Activated naive CD8-positive, alpha-beta T cell treated with anti-CD3 and anti-CD28 coated beads, Interleukin-2, amount 10 ng/mL, durations not matched to agents 7 days and 5 days (primary cell): ENCODE measurements at regions of chr15 and their contacts with region 1.

Region 1: DNA sequence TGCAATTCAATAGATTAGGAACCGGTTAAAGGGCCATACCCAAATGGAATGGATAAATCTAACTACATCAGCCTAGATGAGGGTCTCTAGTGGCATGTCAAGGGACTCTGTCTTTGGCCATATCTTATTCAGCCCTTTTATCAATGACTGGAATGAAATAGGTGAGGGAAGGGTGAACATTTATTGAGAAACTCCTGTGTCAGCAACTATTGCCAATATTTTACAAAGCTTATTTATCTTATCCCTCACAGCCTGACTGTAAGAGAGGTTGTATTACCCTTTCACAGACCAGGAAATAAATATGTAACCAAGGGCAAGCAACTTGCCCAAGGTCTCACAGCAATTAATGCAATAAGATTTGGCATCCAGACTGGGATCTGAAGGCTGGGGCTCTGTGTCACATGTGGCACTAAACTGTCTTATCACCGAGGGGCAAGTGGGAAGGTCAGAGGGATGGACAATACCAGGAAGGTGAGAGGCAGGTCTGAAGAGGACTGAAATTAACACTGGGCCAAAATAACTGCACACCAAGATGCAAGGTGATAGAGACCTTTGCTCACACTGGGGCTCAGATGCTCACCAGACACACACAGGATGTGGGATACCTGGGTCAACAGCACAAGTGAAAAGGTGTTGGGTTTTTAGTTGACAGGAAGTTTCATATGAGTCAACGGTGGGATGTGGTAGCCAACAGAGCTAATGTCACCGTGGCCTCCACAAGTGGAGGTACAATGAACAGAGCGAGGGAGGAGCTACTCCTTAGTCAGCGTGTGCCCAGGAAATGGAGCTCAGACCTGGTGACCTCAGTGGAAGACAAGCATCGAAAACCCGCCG is 261.3 kb downstream of the RPLP1 start:
- DNase-seq: peak; percentile 62
- ATAC-seq: peak; percentile 92
- H3K4me3 Mint-ChIP-seq: peak overlapping the region; percentile 69
- H3K27ac Mint-ChIP-seq: peak overlapping the region; percentile 89
- H3K4me1 Mint-ChIP-seq: peaks cover 55% of the 10 kb centered on the region
- H3K27me3 Mint-ChIP-seq: no peaks in the 10 kb centered on the region

Region 2: DNA sequence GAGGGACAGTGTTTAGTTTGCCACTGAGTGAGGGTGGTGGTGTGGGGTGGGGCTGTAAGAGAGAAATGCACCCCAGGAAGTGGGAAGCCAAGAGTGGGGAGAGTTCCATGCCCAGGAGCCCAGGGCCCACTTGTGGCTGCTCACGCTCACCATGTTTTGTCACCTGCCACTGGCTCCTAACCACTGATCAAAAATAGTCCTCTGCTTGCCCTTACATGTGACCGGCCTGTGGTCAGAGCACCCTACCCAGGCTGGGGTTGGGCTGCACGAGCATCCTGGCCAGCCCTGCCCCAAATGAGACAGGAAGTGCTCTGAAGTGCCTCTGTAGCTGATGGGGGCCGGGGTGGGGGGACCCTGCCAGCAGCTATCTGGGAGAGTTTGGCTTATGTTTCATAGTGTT is 45.0 kb before region 1 on chr15:
- POLR2A ChIA-PET with region 1: interaction called, 12 read pairs
- DNase-seq: peak; percentile 70
- ATAC-seq: peak; percentile 69
- H3K4me3 Mint-ChIP-seq: peak overlapping the region; percentile 41
- H3K27ac Mint-ChIP-seq: peak overlapping the region; percentile 80
- H3K4me1 Mint-ChIP-seq: peaks cover 51% of the 10 kb centered on the region
- H3K27me3 Mint-ChIP-seq: peaks cover 10% of the 10 kb centered on the region

Region 3: DNA sequence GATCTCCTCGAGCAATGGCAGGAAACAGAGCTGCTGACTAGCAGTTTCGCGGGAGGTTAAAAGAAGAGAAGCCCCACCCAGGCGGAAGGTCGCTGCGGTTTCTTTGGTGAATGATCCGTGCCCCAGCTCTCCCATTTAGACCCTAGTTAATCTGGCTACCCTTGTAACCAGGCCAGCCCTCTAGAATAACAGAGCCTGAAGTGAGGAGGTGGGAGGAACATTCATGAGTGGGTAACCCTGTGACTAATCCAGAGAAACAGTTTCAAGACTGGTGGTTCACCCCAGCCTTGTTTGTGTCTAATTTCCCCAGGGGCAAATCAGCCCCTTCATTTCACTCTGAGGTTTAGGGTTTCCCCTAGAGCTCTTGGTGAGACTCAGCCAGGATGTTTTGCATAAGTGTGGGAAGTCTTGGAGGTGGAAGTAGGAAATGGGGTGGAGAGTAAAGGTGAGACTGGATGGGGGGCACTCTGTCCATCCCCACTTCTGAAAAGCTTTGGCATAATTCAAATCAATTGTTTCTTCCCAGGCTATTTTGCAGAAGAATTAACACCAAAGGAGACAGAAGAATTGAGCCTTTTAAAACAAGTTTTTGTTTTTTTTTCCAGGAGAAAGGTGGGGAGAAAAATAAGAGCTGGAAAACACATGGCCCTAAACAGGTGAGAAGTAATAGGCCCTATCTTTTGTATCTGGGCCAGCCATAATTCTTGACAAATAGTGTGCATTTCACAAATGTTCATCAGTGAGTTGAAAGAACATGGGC is 41.8 kb after region 1 on chr15:
- POLR2A ChIA-PET with region 1: interaction called, 13 read pairs
- DNase-seq: peak; percentile 77
- ATAC-seq: peak; percentile 78
- H3K4me3 Mint-ChIP-seq: peak overlapping the region; percentile 65
- H3K27ac Mint-ChIP-seq: peak overlapping the region; percentile 54
- H3K4me1 Mint-ChIP-seq: peaks cover 66% of the 10 kb centered on the region
- H3K27me3 Mint-ChIP-seq: peaks cover 6% of the 10 kb centered on the region